Activated CD4-positive, alpha-beta T cell treated with anti-CD3 and anti-CD28 coated beads, Interleukin-2, amount 10 ng/mL, durations not matched to agents 24 days and 14 days (primary cell): ENCODE measurements at regions of chr3 and their contacts with region 1.

Region 1: DNA sequence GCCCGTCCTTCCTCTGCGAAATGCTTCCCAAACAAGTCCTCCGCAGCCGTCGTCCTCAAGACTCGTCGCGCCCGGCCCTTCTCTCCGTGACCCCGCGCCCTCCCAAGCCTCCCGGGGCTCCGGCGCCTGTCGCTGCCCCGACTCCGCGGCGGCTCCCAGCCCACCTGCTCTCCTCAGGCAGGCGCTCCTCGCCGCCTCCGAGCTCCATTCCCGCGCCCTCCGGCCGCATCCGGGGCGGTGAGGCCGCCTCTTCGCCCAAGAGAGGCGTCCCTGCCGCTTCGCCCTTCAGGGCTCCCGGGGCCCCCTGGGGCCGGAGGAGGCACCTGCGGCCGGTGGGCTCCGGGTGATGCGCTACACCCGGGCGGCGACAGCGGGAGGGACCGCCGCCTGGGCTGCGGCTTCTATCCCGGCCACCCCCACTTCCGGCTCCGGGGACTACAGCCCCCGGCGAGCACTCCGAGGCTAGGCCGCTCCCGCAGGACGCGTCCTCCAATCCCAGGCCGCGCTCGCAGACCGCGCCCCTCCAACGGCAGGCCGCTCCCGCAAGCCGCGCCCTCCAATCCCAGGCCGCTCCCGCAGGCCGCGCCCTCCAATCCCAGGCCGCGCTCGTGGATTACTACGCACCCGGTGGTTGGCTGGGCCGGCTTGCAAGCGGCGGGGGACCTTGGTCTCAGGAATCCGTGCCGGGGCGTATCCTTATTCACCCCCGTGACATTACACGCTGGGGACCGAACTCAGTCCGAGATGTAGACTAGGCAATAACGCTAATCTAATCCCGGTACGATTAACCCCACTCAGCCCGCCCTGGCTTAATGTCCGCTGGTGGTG is at the start of gene RUBCN:
- DNase-seq: peak; percentile 98
- H3K4me3 Mint-ChIP-seq: peak within 1 kb of the TSS; percentile 94
- H3K27ac Mint-ChIP-seq: peak within 1 kb of the TSS; percentile 97
- H3K4me1 Mint-ChIP-seq: peaks cover 30% of the 10 kb centered on the region
- H3K27me3 Mint-ChIP-seq: no peaks in the 10 kb centered on the region
- total RNA-seq, gene RUBCN: 38.8 and 41.0 TPM in 2 replicates

Region 2: DNA sequence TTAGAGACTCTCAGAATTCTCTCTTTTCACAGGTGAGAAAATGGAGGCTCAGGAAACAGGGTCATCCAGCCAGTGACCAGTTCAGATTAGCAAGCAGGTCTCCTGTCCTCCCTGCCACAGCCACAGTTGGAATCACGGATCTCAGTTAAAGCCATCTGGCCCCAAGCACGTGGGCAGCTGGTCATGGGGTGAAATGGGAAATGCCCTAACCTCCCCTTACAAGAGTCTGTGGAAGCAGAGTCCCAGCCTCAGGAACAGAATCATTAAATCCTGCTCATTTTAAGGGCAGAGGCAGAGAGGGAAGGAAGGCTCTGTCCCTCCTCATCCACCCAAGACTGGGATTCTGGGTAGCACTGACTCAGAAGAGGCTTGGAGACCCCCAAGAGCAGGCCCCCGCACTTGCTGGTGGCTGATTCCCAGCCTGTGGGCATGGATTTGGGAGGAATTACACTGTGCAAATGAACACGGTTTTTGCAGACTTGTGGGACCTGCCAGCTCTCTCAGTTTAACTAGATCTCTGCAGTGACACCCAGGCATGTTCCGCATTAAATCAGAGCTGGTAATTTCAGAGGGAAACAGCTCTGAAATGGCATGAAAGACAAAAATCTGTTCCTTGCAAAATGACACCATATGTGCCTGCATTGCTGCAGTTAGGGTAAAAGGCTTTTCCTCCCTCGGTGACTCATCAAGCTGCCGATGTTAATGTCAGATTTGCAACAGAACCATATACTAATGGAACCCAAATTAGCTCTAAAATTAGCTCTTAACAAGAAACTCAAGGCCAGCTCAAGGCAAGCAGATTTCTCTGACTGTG is 269.9 kb before region 1 on chr3:
- intact Hi-C with region 1: no loop called
- DNase-seq: no peak
- H3K4me3 Mint-ChIP-seq: no peak overlapping the region
- H3K27ac Mint-ChIP-seq: peak overlapping the region; percentile 25
- H3K4me1 Mint-ChIP-seq: peaks cover 19% of the 10 kb centered on the region
- H3K27me3 Mint-ChIP-seq: peaks cover 19% of the 10 kb centered on the region

Region 3: DNA sequence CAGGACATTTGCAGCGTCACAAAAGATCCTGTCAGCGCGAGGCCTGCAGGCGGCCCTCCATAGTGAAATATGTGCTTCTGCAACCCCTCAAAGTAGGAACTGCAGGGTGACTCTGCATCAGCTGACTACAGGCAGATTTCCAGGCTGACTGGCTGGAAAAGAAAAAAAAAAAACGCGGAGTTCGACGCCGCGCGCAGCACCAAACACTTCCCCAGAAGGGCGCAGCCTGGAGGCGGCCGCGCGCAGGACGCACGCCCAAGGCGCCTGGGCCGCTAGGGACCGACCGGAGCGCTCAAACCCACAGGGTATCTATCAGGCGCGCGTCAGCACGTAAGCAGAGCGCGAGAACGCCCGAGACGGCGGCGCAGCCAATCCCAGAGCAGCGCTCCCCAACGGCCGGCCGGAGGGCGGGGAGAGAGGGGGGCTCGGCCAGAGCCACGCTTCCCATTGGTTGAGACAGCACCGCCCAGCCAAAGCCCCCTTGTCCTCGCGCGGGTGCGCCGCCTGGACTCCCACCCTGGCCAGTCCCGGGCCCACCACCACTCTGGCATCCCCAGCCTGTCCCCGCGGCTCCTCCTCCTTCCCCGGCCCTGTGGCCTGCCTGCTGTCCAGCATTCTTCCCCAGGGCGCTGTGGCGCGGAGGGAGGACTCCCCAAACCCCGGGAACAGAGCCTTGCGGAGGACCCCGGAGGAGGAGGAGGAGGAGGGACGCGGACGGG is 182.0 kb before region 1 on chr3:
- intact Hi-C with region 1: no loop called
- DNase-seq: peak; percentile 98
- H3K4me3 Mint-ChIP-seq: peak overlapping the region; percentile 88
- H3K27ac Mint-ChIP-seq: peak overlapping the region; percentile 98
- H3K4me1 Mint-ChIP-seq: peaks cover 39% of the 10 kb centered on the region
- H3K27me3 Mint-ChIP-seq: peaks cover 9% of the 10 kb centered on the region

Region 4: GRCh38 chr3:197711973-197712707 is 24.6 kb before region 1 on chr3:
- intact Hi-C with region 1: loop called (anchors 1 kb)
- DNase-seq: peak; percentile 95
- H3K4me3 Mint-ChIP-seq: peak overlapping the region; percentile 78
- H3K27ac Mint-ChIP-seq: peak overlapping the region; percentile 93
- H3K4me1 Mint-ChIP-seq: peaks cover 33% of the 10 kb centered on the region
- H3K27me3 Mint-ChIP-seq: no peaks in the 10 kb centered on the region

Region 5: DNA sequence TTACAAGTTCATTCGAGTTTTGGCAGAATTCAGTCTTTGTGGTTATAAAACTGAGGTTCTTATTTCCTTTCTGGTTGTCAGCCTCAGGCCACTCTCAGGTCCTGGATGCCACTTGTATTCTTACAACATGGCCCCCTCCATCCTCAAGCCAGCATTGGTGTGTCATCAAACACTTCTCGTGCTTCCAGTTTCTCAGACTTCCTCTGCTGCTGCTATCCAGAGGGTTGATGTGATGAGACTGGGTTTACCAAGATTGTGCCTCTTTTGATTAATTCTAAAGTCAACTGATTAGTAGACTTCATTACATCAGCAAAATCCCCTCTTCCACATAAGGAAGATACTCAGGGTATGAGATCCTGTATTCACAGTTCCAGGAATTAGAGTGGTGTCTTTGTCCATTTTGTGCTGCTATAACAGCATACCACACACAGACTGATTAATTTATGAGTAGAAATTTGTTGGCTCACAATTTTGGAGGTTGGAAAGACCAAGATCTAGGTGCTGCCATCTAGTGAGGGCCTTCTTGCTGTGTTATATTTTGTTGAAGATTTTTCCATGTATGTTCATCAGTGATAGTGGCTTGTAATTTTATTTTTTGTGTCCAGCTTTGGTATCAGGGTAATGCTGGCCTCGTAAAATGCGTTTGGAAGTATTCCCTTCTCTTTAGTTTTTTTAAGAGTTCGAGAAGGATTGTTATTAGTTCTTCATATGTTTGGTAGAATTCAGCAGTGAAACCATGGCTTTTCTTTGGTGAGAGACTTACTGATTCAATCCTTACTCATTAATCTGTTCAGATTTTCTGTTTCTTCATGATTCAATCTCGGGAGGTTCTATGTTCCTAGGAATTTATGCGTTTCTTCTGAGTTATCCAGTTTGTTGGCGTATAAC is 65.4 kb after region 1 on chr3:
- intact Hi-C with region 1: loop called (anchors 5 kb)
- DNase-seq: peak; percentile 74
- H3K4me3 Mint-ChIP-seq: peak overlapping the region; percentile 18
- H3K27ac Mint-ChIP-seq: peak overlapping the region; percentile 34
- H3K4me1 Mint-ChIP-seq: peaks cover 33% of the 10 kb centered on the region
- H3K27me3 Mint-ChIP-seq: no peaks in the 10 kb centered on the region

Region 6: DNA sequence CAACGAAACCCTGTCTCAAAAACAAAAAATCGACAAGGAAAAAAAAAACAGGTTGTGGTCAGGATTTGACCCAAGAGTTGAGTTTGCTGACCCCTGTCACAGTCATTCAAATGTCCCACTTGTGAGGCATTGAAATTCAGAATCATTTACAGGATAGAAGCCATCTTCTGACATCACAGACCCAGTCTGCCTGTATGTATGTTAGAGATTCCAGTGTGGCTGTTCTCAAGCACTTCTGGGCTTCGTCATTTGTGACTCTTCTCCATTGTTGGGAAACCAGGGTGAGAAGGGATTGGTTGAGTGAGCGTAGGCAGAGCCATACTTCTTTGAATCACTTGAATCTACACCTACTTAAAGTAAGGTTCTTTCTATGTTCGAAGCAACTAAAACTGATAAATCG is 280.4 kb after region 1 on chr3:
- intact Hi-C with region 1: no loop called
- DNase-seq: no peak
- H3K4me3 Mint-ChIP-seq: no peak overlapping the region
- H3K27ac Mint-ChIP-seq: no peak overlapping the region
- H3K4me1 Mint-ChIP-seq: no peaks in the 10 kb centered on the region
- H3K27me3 Mint-ChIP-seq: no peaks in the 10 kb centered on the region